ENCODE measurements at regions of chr7 and their contacts with region 1.

Region 1: GRCh38 chr7:143181349-143181748 is 1.9 kb upstream of the TAS2R39 start:
- DNase-seq: no peak
- ATAC-seq: no peak
- H3K4me3 ChIP-seq: no peak overlapping the region
- H3K27ac ChIP-seq: no peak overlapping the region
- H3K4me1 ChIP-seq: no peaks in the 10 kb centered on the region
- H3K27me3 ChIP-seq: peaks cover 0 to 6% (median 0%) of the 10 kb centered on the region in 3 donors
- CTCF ChIP-seq: no peak

Region 2: GRCh38 chr7:143199040-143199439 is 17.7 kb after region 1 on chr7:
- intact Hi-C with region 1: loop called in 1 of 2 experiments (anchors 1 kb)
- DNase-seq: no peak
- ATAC-seq: no peak
- H3K4me3 ChIP-seq: no peak overlapping the region
- H3K27ac ChIP-seq: no peak overlapping the region
- H3K4me1 ChIP-seq: no peaks in the 10 kb centered on the region
- H3K27me3 ChIP-seq: no peaks in the 10 kb centered on the region
- CTCF ChIP-seq: no peak